ENCODE measurements at regions of chr9 and their contacts with region 1.

Region 1: GRCh38 chr9:15104826-15105420 is 194.7 kb upstream of the FREM1 start:
- DNase-seq: no peak
- H3K4me3 ChIP-seq: no peak overlapping the region
- H3K27me3 ChIP-seq: no peaks in the 10 kb centered on the region
- CTCF ChIP-seq: peak; percentile 82

Region 2: DNA sequence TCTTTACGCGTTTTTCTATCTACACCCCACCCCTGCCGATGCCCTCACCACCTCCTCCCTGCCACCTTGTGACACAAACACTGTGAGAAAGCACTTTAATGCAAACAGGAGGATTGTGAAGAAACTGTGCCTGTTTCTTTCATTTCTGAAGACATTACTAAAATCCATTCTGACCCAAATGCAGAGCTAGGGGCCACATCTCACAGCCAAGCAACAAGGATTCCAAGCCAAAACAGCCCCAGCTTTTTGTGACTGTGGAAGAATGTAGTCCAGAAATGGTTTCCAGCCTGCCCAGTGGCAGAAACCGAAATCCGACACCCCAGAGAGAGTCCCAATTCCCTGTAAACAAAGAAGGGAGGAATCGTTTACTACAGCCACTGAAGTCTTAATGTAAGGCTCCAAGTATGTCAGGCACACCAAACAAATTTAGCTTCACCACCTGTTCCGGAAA is 11.2 kb after region 1 on chr9:
- CTCF ChIA-PET with region 1: interaction called, 30 read pairs
- POLR2A ChIA-PET with region 1: no interaction called
- DNase-seq: no peak
- H3K4me3 ChIP-seq: no peak overlapping the region
- H3K27me3 ChIP-seq: no peaks in the 10 kb centered on the region
- CTCF ChIP-seq: no peak

Region 3: DNA sequence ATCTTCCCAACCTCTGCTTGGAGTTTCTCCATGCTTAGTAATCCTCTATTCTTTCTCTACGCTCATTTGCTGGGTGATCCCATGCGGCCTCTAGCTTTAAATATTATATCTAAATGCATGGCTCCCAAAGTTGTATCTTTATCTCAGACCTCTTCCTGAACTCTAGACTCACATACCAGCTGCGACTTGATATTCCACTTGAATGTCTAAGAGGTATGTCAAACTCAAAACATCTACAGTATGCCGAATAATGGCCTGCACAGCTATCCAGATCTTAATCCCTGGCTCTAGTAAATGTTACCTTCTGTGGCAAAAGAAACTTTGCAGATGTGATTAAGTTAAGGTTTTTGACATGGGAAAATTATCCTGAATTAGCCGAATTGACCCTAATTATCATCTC is 22.9 kb after region 1 on chr9:
- CTCF ChIA-PET with region 1: interaction called, 10 read pairs
- POLR2A ChIA-PET with region 1: no interaction called
- DNase-seq: no peak
- H3K4me3 ChIP-seq: no peak overlapping the region
- H3K27me3 ChIP-seq: peaks cover 1% of the 10 kb centered on the region; the same call in 1 of the 2 replicates
- CTCF ChIP-seq: no peak

Region 4: DNA sequence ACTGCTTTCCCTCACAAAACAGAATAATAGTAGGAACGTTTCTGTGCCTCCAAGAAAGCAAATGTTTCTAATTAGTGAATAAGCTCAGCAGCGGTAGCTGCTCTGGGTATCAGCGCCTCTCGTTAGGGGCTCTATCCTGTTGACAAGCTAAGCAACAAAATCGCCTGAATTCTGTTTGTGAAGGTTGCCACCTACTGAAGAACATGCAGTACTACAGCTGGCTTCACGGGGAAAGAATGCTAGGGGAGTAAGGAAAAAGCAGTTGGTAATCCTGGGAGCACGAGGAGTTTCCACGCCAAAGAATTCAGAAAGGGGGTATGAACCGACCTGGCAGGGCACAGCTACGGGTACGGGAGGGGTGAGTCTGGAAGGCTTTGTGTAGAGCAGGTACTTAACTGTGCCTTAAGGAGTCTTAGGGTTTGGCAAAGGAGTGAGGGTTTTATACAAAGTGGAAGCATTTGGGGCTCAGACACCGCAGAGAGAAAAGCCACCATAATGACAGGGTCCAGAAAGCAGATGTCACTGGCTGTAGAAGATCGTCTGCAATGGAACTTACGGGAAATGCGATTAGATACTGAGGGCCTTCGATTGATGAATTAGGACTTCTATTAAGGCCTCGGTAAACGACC is 30.4 kb after region 1 on chr9:
- CTCF ChIA-PET with region 1: interaction called, 80 read pairs
- POLR2A ChIA-PET with region 1: no interaction called
- DNase-seq: no peak
- H3K4me3 ChIP-seq: no peak overlapping the region
- H3K27me3 ChIP-seq: no peaks in the 10 kb centered on the region
- CTCF ChIP-seq: peak; percentile 90

Region 5: DNA sequence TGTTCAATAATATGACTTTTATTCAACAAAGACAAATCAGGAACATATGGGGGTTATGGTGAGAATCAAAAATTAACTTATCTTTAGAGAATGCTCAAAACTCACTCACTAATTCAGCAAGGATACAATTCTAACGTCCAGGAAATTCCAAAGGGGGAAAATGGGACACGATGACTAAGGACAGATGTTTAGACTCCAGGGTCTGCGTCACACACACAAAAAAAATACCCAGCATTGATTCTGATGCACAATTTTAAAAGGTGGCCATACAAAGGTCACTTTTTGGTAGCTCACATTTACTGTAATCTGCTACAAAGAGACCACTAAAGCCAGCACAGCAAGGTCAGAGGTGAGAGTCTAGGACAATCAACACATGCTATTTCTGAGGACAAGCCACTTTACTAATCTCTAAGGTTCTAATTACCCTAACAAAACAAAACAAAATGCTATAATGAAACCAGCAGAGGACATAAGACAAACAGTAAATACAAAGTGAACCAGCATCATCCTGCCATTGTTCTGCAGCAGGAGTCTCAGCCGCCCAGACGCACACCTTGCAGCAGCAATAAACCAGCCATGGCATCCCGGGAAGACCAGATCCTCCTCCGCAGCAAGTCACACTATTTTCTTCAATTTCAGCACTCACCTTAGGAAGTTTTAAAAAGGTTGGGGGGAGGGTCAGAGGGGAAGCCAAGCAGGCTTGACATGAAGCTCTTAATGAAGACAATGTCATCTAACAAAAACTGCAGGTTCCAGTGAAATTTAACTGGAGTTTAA is 144.3 kb after region 1 on chr9:
- CTCF ChIA-PET with region 1: no interaction called
- POLR2A ChIA-PET with region 1: no interaction called
- DNase-seq: peak; percentile 41
- H3K4me3 ChIP-seq: no peak overlapping the region
- H3K27me3 ChIP-seq: no peaks in the 10 kb centered on the region
- CTCF ChIP-seq: no peak